ENCODE measurements at regions of chr4 and their contacts with region 1.

Region 1: DNA sequence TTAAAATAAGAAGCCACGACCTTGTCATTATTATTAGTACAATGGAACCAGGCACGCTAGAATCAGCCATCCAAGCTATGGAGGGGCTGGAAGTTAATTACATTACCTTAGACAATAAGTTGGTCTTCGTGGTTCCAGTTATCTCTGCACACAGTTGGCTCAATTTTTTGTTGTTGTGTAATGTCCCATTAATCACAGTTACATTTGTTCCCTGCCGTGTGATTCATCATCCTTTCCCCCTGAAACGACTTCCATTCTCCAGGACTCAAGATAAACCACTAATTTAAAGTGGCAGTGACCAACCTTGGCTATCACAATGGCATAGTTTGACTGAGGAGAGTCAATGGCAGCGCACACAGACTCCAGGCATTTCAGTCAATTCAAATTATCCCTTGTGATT is 905.0 kb downstream of the RAB28 start:
- DNase-seq: no peak
- ATAC-seq: peak in 3 of 8 donors; percentile 42 to 79 (median 50)
- H3K4me3 ChIP-seq: no peak overlapping the region
- H3K27ac ChIP-seq: no peak overlapping the region
- H3K4me1 ChIP-seq: peaks cover 0 to 5% (median 0%) of the 10 kb centered on the region in 9 donors
- H3K27me3 ChIP-seq: no peaks in the 10 kb centered on the region
- CTCF ChIP-seq: no peak

Region 2: DNA sequence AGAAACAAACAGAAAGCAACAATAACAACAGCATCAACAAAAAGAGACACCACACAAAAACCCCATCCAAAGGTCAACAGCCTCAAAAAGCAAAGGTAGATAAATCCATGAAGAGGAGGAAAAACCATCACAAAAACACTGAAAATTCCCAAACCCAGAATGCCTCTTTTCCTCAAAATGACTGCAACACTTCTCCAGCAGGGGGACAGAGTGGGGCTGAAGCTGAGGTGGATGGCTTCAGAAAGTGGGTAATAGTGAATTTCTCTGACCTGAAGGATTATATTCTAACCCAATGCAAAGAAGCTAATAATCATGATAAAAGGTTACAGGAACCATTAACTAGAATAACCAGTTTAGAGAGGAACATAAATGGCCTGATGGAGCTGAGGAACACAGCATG is 16.8 kb after region 1 on chr4:
- intact Hi-C with region 1: loop called in 1 of 10 experiments (anchors 1 kb)
- DNase-seq: no peak
- ATAC-seq: no peak
- H3K4me3 ChIP-seq: no peak overlapping the region
- H3K27ac ChIP-seq: no peak overlapping the region
- H3K4me1 ChIP-seq: no peaks in the 10 kb centered on the region
- H3K27me3 ChIP-seq: no peaks in the 10 kb centered on the region
- CTCF ChIP-seq: peak in 1 of 9 donors; percentile 6